ENCODE measurements at regions of chr3 and their contacts with region 1.

Region 1: GRCh38 chr3:170811928-170812591 is 57.9 kb downstream of the RPL22L1 start:
- DNase-seq: peak; percentile 77
- CTCF ChIP-seq: peak; percentile 93

Region 2: DNA sequence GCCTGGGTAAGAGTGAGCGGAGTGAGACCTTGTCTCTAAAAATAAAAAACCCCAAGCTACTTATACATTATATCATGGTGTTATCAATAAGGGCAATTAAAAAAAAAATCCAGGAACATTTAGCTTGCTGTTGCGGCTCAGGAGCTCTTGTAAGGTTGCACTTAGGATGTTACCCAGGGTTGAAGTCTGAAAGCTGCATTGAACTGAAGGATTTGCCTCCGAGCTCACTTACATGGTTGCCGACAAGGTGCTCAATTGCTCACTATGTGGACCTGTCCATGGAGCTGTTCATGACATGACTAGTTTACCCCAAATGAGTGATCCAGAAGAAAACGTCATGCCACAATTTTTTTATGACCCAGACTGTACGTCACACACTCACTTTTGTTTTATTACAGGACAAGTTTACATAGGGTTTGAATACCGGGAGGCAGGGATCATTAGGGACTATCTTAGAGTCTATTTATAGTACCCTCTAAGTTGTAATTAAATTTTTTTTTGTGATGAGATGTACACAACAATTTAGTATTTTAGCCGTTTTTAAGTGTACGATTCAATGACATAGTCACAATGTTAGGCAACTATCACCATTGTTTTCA is 414.4 kb before region 1 on chr3:
- CTCF ChIA-PET with region 1: interaction called, 11 read pairs
- POLR2A ChIA-PET with region 1: no interaction called
- DNase-seq: no peak
- CTCF ChIP-seq: no peak

Region 3: GRCh38 chr3:170431054-170431453 is 381.0 kb before region 1 on chr3:
- CTCF ChIA-PET with region 1: interaction called, 17 read pairs
- POLR2A ChIA-PET with region 1: no interaction called
- DNase-seq: no peak
- CTCF ChIP-seq: no peak

Region 4: DNA sequence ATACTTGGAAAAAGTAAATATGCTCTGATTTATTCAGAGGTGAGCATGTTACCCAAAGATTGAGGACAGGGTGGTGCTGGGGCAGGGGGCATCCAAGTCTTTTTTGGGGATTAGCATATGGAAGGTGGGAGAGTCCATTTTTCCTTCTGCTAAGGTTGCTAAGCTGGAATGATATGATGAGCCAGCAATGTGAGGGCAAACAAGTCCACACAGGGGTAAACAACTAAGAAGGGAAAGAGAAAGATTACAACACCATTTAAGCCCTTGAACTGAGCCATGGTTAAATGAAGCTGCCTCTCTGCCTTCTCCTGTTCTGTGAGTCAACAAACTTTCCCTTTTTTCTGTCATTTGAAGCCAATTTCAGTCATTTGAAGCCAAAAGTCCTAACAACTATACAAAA is 31.1 kb before region 1 on chr3:
- CTCF ChIA-PET with region 1: interaction called, 10 read pairs
- POLR2A ChIA-PET with region 1: no interaction called
- DNase-seq: no peak
- CTCF ChIP-seq: no peak

Region 5: DNA sequence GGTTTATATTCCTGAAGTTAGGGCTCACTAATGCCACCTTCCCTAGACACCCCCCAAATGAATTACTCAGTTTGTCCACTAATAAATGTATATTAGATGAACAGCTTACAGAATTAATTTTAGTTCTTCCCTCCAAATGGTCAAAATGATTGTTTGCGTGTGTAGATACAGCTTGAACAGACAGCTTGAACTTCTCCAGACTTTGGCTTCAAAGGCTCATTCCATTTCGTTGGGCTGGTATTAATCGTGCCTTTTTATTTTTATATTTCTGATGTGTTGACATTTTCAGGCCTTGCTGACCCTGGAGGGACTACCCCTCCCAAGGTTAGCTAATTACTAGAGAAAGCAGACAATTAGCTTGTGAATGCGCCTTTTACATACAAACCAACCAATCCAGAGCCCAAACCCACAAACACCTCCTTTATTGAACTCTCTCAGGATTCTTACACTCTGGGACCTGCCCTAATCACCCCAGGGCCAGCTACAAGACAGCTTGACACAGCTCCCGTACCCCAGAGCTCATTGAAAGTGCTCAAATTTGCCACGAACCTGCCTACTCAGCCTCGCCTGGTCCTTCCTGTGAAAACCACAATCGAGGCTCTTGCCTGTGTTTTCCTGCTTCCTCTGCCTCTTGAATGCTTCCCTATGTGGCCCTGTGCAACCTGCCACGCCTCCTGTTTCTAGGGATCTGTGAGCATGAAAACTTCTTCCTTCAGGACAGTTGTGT is 17.6 kb after region 1 on chr3:
- CTCF ChIA-PET with region 1: interaction called, 20 read pairs
- POLR2A ChIA-PET with region 1: no interaction called
- DNase-seq: no peak
- CTCF ChIP-seq: no peak

Region 6: GRCh38 chr3:170835336-170835735 is 23.3 kb after region 1 on chr3:
- CTCF ChIA-PET with region 1: interaction called, 15 read pairs
- POLR2A ChIA-PET with region 1: no interaction called
- DNase-seq: no peak
- CTCF ChIP-seq: no peak

Region 7: DNA sequence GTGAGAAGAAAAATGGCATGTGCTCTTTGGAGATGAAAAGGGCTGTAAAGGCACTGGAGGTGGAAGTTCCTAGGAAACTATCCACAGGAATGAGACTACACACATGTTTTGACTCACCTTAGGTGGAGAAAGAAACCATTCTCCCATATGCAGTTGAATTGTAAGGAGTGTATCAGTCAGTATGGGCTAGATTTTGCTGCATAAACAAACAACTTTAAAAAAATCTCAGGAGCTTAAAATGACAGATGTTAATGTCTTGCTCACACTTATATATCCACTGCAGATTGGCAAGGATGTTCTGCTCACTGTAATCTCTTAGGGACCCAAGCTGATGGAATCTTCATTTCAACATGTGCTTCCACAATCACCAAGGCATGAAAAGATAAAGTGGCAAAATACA is 32.3 kb after region 1 on chr3:
- CTCF ChIA-PET with region 1: interaction called, 14 read pairs
- POLR2A ChIA-PET with region 1: no interaction called
- DNase-seq: no peak
- CTCF ChIP-seq: no peak

Region 8: DNA sequence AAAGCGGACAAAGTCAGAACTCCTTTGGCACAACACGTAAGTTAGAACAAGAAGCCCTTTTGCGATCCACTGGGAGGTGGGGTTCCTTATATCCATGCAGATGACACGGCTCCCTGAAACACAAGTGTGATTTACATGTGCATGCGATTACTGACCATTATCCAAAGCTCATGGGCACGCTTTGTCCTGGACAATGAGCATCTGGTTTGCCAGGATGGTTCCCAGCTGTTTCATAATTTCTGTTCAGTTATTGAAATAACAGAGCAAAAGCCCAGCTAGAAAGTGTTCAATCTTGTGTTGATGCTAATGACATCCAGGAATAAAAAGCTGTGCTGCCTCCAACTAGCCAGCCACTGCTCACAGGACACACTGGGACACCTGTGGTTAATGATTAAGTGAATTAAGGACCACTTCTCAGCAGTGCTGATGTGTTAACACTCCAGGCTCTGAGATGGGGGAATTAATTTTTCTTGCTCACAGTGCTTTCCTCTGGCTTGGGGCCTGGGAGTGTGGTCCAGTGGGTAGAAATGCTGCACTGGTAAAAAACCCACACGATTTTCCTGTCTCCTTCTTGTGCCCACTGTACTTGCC is 337.6 kb after region 1 on chr3:
- CTCF ChIA-PET with region 1: no interaction called
- POLR2A ChIA-PET with region 1: no interaction called
- DNase-seq: no peak
- CTCF ChIP-seq: no peak